Activated T-helper 2 cell treated with anti-CD3 and anti-CD28 coated beads, Interferon-gamma antibody, Interleukin-2, Interleukin-4, amounts not matched to agents 10 μg/mL and 5 μg/mL and 100 μg/mL, durations not matched to agents 14 hours and 24 hours and 36 hours (primary cell): ENCODE measurements at regions of chr2 and their contacts with region 1.

Region 1: DNA sequence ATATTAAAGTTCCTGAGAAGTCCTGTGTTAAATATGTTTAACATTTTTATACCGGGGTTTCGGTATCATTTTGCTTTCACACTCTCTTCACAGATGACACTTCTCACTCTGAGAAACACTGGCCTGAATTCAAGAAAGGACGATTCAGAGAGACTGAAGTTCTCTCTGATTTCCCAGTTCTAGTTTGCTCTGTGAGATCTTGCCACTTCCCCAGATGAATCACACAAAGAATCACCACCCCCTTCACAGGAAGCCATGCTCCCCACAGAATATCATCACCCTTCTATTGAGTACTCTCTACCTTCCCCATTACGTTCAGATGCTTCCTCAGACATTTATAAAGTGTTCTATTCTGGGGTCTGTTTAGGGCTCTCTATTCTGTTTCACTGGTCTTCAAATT is 16.1 kb upstream of the CD207 start:
- DNase-seq: peak; percentile 27
- H3K4me3 Mint-ChIP-seq: no peak overlapping the region
- H3K27ac Mint-ChIP-seq: peak overlapping the region; percentile 74
- H3K4me1 Mint-ChIP-seq: peaks cover 30% of the 10 kb centered on the region
- H3K27me3 Mint-ChIP-seq: peaks cover 3% of the 10 kb centered on the region

Region 2: DNA sequence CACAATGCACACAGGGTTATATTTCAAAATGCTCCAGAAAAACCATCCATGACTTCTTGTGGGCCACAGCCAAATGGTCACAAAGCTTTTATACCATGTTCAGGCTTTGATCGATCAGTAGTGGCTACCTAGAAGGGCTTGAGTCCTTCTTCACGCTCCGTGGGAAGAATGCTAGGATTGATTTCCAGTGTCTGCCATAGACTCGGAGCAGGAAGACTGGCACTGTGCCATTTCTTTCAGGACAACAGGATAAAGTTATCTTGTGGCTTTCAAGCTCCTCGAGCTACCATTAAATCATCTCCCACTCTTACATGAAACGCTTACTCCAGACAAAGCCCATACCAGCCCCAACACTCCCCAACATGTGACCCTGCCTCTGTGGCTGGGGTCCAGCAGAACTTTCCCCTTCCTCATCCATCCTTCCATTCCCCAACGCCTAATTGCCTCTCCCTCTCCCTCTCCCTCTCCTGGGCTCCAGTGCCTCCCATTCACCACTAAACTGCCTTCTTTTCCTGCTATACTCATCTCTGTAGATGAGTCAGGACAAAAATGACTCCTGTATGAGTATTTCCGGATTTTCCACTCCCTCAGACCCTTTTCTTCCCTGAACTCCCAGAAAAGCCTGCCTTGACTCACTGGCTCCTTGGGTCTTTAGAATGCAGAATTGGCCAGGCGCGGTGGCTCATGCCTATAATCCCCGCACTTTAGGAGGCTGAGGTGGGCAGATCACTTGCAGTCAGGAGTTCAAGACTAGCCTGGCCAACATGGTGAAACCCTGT is 124.6 kb before region 1 on chr2:
- intact Hi-C with region 1: no loop called
- DNase-seq: no peak
- H3K4me3 Mint-ChIP-seq: no peak overlapping the region
- H3K27ac Mint-ChIP-seq: no peak overlapping the region
- H3K4me1 Mint-ChIP-seq: no peaks in the 10 kb centered on the region
- H3K27me3 Mint-ChIP-seq: no peaks in the 10 kb centered on the region

Region 3: GRCh38 chr2:70817284-70817954 is 34.3 kb before region 1 on chr2:
- intact Hi-C with region 1: loop called (anchors 1 kb)
- DNase-seq: no peak
- H3K4me3 Mint-ChIP-seq: no peak overlapping the region
- H3K27ac Mint-ChIP-seq: peak overlapping the region; percentile 71
- H3K4me1 Mint-ChIP-seq: peaks cover 19% of the 10 kb centered on the region
- H3K27me3 Mint-ChIP-seq: no peaks in the 10 kb centered on the region

Region 4: GRCh38 chr2:70826696-70827350 is 24.9 kb before region 1 on chr2:
- intact Hi-C with region 1: loop called (anchors 2 kb)
- DNase-seq: no peak
- H3K4me3 Mint-ChIP-seq: no peak overlapping the region
- H3K27ac Mint-ChIP-seq: peak overlapping the region; percentile 83
- H3K4me1 Mint-ChIP-seq: peaks cover 25% of the 10 kb centered on the region
- H3K27me3 Mint-ChIP-seq: no peaks in the 10 kb centered on the region

Region 5: GRCh38 chr2:70887550-70888246 is 36.0 kb after region 1 on chr2:
- intact Hi-C with region 1: no loop called
- DNase-seq: no peak
- H3K4me3 Mint-ChIP-seq: peak overlapping the region; percentile 66
- H3K27ac Mint-ChIP-seq: no peak overlapping the region
- H3K4me1 Mint-ChIP-seq: peaks cover 20% of the 10 kb centered on the region
- H3K27me3 Mint-ChIP-seq: peaks cover 84% of the 10 kb centered on the region